Spleen (tissue), 13 donors: ENCODE measurements at regions of chr1 and their contacts with region 1.

Region 1: GRCh38 chr1:151839457-151840405 is at the start of gene C2CD4D:
- DNase-seq: peak; percentile 83
- H3K4me3 ChIP-seq: peak within 1 kb of the TSS; percentile 24 to 71 (median 46)
- H3K27ac ChIP-seq: peak within 1 kb of the TSS in 5 of 8 donors; percentile 24 to 69 (median 66)
- H3K4me1 ChIP-seq: peaks cover 15 to 43% (median 35%) of the 10 kb centered on the region in 6 donors
- H3K27me3 ChIP-seq: peaks cover 0 to 41% (median 34%) of the 10 kb centered on the region in 7 donors
- CTCF ChIP-seq: no peak
- POLR2A ChIP-seq: no peak
- total RNA-seq, gene C2CD4D: 0.51 TPM in 1 of 7 donors, not detected in the others

Region 2: DNA sequence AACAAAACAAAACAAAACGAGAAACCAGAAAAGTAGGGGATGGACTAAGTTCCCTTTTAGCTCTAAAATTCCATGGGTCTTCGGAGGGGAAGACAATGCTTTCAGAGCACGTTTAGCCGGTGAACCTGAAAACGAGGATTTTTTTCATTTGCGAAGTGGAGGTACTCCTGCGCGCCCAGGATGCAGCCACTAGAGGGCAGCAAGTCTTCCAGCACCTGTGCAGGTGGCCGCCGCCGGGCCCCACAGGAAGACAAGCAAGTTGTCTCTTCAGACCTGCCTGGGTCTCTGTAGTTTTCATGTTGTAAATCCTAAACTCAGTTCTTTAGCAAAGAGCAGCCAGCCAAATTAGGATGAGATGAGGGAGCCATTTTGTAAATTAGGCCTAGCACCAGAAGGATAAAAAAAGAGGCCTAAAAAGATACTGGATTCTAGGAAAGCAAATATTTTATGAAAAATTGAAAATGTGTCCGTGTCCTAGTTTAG is 245.5 kb before region 1 on chr1:
- intact Hi-C with region 1: loop called (anchors 10 kb)
- DNase-seq: peak; percentile 96
- H3K4me3 ChIP-seq: peak overlapping the region in 2 of 8 donors; percentile 14 to 39
- H3K27ac ChIP-seq: peak overlapping the region in 2 of 8 donors; percentile 4 to 40
- H3K4me1 ChIP-seq: peaks cover 0 to 14% (median 9%) of the 10 kb centered on the region in 6 donors
- H3K27me3 ChIP-seq: no peaks in the 10 kb centered on the region
- CTCF ChIP-seq: peak; percentile 74 to 96 (median 93)
- POLR2A ChIP-seq: no peak

Region 3: DNA sequence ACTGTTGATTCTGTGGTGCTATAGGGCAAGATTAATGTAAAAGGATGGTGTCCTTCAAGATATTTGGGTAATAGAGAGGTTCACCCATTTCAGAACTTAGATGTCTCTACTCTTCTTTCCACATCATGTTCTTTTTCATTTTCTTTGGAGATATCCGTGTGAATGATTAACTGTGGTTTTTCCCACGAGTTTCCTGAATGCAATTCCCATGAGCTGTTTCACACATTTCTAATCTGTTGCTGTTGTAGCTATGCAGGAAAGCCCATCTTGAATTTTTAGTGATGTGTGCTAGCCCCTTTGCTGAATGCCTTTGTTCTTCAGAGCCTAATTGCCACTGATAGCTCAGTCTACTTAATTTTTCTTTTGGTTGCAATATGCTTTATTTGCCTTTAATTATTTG is 200.3 kb before region 1 on chr1:
- intact Hi-C with region 1: no loop called
- DNase-seq: no peak
- H3K4me3 ChIP-seq: no peak overlapping the region
- H3K27ac ChIP-seq: no peak overlapping the region
- H3K4me1 ChIP-seq: peaks cover 4 to 39% (median 14%) of the 10 kb centered on the region in 6 donors
- H3K27me3 ChIP-seq: no peaks in the 10 kb centered on the region
- CTCF ChIP-seq: no peak
- POLR2A ChIP-seq: no peak